Activated naive CD8-positive, alpha-beta T cell treated with anti-CD3 and anti-CD28 coated beads, Interleukin-2, amount 10 ng/mL, durations not matched to agents 7 days and 5 days (primary cell): ENCODE measurements at regions of chr1 and their contacts with region 1.

Region 1: GRCh38 chr1:160261893-160262794 is at the start of gene DCAF8:
- DNase-seq: peak; percentile 96
- ATAC-seq: peak; percentile 93
- H3K4me3 Mint-ChIP-seq: peak within 1 kb of the TSS; percentile 93
- H3K27ac Mint-ChIP-seq: peak within 1 kb of the TSS; percentile 93
- H3K4me1 Mint-ChIP-seq: peaks cover 20% of the 10 kb centered on the region
- H3K27me3 Mint-ChIP-seq: no peaks in the 10 kb centered on the region
- total RNA-seq, gene DCAF8: 147 to 150 TPM

Region 2: DNA sequence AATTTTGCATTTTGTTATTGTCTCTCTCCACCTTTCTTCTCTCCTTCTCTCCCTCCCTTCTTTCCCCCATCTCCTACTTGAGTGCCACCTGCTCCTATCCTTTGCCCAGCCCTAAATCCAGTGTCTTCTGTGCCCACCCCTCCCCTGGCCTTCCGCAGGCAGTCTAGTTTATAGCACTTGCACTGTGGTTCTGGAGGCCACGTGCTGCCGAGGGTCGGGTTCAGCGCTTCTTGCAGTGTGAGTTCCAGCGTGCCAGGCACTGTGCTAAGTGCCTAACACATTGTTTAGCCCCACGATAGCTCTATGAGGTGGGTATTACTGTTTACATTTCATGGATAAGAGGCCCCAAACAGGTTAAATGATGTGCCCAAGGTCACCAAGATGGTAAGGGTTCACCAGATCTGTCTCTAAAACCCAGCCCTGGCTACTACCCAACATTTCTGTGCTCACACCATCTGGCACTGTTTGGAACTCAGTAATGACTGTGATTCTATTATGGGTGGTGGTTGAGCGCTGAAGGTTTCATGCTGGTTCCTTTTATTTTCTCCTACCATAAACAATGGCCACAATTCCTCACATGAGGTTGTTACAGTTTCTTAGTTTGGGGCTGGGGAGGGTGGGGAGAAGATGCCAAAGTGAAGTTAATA is 124.8 kb before region 1 on chr1:
- POLR2A ChIA-PET with region 1: no interaction called
- DNase-seq: no peak
- ATAC-seq: no peak
- H3K4me3 Mint-ChIP-seq: no peak overlapping the region
- H3K27ac Mint-ChIP-seq: no peak overlapping the region
- H3K4me1 Mint-ChIP-seq: no peaks in the 10 kb centered on the region
- H3K27me3 Mint-ChIP-seq: peaks cover 11% of the 10 kb centered on the region

Region 3: GRCh38 chr1:160251687-160252526 is 10.2 kb before region 1 on chr1:
- POLR2A ChIA-PET with region 1: interaction called, 10 read pairs
- DNase-seq: no peak
- ATAC-seq: peak; percentile 96
- H3K4me3 Mint-ChIP-seq: no peak overlapping the region
- H3K27ac Mint-ChIP-seq: no peak overlapping the region
- H3K4me1 Mint-ChIP-seq: peaks cover 2% of the 10 kb centered on the region
- H3K27me3 Mint-ChIP-seq: no peaks in the 10 kb centered on the region

Region 4: DNA sequence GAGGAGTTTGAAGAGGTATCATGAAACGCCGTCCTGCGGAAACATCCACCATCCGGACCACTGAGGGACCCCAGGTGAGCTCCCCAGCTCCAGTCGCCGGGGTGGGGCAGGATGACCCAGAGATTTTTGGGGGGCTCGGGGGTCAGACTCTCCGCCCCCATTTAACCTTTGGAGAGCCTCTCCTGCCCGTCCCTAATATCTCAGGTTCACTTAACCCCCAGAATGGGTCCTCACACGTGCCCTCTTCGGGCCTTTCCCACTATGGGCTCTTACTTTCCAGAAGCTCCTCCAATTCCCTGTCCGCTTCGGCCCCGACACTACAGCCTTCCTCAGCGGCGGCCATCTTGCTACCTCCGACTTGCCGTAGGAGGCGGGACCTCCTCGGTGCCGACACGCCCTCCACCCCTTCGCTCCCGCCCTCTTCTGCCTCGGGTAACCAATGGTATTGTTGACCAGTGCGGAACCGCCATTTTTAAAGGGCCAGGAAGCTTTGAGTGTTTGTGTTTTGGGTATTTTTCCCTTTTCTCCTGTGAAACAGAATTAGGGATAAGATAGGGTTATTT is 22.7 kb after region 1 on chr1 and contains the start of gene PEX19:
- POLR2A ChIA-PET with region 1: interaction called, 49 read pairs
- DNase-seq: peak; percentile 94
- ATAC-seq: peak; percentile 98
- H3K4me3 Mint-ChIP-seq: peak within 1 kb of the TSS; percentile 99
- H3K27ac Mint-ChIP-seq: peak within 1 kb of the TSS; percentile 97
- H3K4me1 Mint-ChIP-seq: peaks cover 19% of the 10 kb centered on the region
- H3K27me3 Mint-ChIP-seq: no peaks in the 10 kb centered on the region
- total RNA-seq, gene PEX19: 59.0 to 65.4 TPM

Region 5: GRCh38 chr1:160394673-160395072 is 132.5 kb after region 1 on chr1:
- POLR2A ChIA-PET with region 1: no interaction called
- DNase-seq: no peak
- ATAC-seq: no peak
- H3K4me3 Mint-ChIP-seq: no peak overlapping the region
- H3K27ac Mint-ChIP-seq: no peak overlapping the region
- H3K4me1 Mint-ChIP-seq: peaks cover 1% of the 10 kb centered on the region
- H3K27me3 Mint-ChIP-seq: peaks cover 14% of the 10 kb centered on the region